ENCODE measurements at regions of chr7 and their contacts with region 1.

Region 1: DNA sequence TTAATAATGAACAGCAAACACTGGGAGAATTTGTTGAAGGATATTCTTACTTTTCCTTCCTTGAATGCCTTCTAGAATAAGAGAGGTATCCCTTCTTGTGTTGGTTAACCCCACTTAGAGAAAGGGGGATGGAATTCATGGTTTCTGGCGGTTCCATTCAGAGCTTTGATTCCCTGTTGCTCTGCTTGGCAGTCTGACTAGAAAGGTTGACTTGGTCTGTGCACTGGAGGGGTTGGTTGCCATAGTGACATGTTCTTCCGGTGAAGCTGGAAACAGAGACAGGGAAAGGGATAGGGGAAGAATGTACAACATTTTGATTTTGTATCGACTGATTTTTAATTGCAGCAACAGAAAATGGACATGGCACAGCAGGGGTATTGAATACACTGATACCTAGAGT is 2.5 kb downstream of the TMEM178B start:
- DNase-seq: no peak
- ATAC-seq: no peak
- H3K4me3 ChIP-seq: no peak overlapping the region
- H3K27ac ChIP-seq: no peak overlapping the region
- H3K4me1 ChIP-seq: peaks cover 32% of the 10 kb centered on the region
- H3K27me3 ChIP-seq: peaks cover 60% of the 10 kb centered on the region
- CTCF ChIP-seq: no peak

Region 2: DNA sequence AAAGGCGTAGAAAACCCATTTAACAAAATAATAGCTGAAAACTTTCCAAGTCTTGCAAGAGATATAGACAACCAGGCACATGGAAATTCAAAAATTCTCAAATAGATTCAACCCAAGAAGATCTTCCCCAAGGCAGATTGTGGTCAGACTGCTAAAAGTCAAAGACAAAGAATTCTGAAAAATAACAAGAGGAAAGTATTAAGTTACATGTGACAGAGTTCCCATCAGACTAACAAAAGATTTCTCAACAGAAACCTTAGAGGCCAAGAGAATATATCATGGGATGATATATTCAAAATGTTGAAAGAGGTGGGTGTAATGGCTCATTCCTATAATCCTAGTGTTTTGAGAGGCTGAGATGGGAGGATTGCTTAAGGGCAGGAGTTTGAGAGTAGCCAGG is 57.3 kb after region 1 on chr7:
- intact Hi-C with region 1: loop called (anchors 5 kb)
- DNase-seq: no peak
- ATAC-seq: no peak
- H3K4me3 ChIP-seq: no peak overlapping the region
- H3K27ac ChIP-seq: no peak overlapping the region
- H3K4me1 ChIP-seq: no peaks in the 10 kb centered on the region
- H3K27me3 ChIP-seq: no peaks in the 10 kb centered on the region
- CTCF ChIP-seq: no peak